AG04449 (cell line): ENCODE measurements at regions of chr17 and their contacts with region 1.

Region 1: DNA sequence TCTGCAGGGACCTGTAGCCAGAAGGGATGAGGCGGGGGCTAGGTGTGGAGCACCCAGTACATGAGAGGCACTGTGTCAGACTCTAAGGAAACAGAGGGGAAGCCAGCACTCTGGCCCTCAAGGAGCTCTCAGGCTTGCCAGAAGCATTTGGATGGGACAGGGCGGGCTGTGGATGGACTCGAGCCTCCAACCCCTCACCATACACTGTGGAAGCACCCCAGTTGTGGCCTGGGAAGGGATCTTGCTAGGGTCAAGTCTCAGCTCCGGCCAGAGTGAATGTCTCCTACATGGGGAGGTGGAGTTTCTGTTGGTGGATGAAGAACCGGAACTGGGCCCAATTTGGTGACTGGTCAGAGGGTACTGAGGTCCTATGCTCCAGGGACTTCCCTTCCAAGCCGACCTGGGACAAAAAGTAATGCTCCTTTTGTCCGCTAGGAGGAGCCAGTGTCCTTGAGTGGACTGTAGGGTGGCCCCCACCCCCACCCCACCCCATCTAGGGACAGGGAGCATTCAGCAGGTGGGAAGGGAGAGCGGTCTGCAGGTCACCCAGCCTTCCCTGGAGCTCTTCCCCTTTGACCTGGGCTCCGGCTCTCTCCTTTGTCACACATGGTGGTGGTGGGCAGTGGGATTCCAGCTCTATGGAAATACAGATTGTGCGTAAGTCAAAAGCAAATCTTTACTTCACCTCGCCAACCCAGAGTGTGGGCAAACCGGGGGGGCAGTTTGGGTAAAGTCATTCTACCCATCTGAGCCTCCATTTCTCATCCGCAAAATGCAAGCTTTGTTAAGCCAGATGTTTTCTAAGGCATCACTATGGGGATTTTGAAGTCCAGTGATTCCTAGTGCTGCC is 20.4 kb upstream of the PHB1 start:
- DNase-seq: no peak
- H3K4me3 ChIP-seq: no peak overlapping the region
- CTCF ChIP-seq: peak; percentile 70

Region 2: DNA sequence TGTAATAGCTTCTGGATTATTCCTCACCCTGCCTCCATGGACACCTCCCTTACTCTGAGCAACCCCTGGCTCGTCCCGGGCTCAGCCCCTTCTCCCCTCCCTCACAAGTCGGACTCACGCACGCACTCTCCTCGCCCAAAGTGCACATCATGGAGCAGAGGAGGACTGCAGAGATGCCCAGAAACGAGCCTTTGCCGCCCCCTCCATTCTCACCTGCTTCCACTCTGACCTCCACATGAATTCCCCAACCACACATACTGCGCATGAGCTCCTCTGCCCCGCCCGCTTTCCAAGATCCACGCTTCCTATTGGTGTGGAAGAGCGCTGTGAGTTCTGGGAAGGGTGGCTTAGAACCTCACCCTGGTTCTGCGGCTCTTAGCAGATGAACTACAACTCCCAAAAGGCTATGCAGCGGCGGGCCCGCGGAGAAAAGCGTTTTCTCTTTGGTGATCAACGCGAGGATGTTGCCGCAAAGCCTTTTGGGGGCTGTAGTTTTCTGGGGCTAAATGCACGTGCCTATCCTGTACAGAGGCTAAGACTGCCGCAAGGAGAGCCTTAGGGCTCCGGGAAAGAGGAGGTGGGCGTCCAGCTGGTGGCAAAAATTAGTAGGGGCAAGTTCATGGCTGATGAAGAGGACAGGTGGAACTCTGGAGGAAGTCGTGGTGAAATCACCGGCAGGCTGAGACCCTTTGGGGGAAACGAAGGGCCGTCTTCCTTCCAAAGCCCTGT is 20.3 kb before region 1 on chr17 and contains the start of gene PHB1:
- CTCF ChIA-PET with region 1: interaction called, 21 read pairs
- POLR2A ChIA-PET with region 1: no interaction called
- DNase-seq: peak; percentile 83
- H3K4me3 ChIP-seq: peak within 1 kb of the TSS; percentile 100
- CTCF ChIP-seq: no peak

Region 3: DNA sequence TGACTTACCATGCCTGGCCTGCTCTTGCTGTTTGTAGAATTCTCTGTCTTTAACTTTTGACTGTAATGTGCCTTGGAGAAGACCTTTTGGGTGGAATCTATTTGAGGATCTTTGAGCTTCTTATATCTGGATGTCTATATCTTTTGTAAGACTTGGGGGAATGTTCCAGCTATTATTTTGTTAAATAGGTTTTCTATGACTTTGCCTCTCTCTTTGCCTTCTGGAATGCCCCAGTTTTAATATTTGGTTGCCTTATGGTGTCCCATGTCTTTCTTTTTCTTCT is 10.1 kb before region 1 on chr17:
- CTCF ChIA-PET with region 1: interaction called, 35 read pairs
- POLR2A ChIA-PET with region 1: no interaction called
- DNase-seq: no peak
- H3K4me3 ChIP-seq: no peak overlapping the region
- CTCF ChIP-seq: no peak

Region 4: DNA sequence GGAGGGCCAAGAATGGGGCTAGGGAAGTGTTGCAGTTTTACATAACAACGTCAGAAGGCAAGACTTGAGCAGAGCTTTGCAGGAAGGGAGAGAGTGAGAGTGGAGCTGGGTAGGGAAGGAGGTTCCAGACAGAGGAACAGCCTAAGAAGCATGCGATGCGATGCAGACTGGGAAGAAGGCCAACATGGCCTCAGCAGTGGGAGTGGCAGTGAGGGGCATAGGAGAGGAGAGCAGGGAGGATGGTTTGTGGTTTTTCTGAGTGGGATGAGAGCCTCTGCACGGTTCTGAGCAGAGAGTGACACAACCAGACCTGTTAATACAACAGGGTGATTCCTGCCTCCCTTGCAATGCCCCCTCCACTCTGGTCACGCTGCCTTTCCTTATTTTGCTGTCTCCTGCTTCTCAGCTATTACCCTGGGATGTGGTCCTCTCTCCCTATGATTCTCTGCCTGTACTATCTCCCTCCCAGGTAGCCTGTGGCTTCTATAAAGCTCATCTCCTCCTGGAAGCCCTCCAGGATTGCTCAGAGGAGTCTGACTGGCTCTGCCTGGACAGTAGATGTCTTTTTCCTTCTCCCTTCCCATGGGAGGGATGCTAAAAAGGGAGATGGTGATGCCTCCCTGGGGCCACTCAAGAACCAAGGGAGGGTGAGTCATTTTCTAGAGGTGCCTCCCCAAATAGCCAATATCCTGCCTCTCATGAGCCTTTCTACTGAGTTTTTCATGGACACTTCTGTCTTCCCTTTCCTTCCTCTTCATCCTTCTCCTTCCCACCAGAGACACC is 21.3 kb after region 1 on chr17:
- CTCF ChIA-PET with region 1: interaction called, 84 read pairs
- POLR2A ChIA-PET with region 1: no interaction called
- DNase-seq: peak; percentile 46
- H3K4me3 ChIP-seq: no peak overlapping the region
- CTCF ChIP-seq: no peak

Region 5: DNA sequence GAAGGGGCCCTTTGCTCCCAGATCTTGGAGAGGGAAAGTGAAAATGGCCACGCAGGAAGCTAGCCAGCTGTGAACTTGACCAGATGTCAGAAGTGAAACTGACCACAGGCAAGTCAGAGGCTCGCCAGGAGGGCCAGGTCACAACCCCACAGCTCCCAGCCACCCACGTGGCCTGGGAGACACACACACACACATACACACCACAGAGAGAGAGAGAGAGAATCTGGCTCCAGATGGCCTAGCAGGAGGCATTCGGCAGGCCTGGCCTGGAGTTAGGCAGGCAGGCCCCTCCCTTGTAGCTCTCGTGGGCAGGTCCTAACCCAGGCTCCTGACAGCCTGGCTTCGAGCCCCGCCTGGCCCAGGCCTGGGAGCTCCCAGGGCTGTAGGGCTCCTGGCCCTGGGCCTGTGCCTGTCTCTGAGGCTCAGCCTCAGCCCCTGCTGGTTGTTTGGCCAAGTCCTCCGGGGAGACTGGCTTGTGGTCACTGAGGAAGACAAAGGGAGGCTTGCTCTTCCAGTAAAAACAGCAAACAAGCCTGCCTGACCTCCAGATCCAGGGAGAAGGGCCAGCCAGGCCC is 80.2 kb after region 1 on chr17:
- CTCF ChIA-PET with region 1: interaction called, 14 read pairs
- POLR2A ChIA-PET with region 1: no interaction called
- DNase-seq: peak; percentile 41
- H3K4me3 ChIP-seq: no peak overlapping the region
- CTCF ChIP-seq: peak; percentile 23

Region 6: GRCh38 chr17:49548051-49548505 is 113.0 kb after region 1 on chr17:
- CTCF ChIA-PET with region 1: interaction called, 376 read pairs
- POLR2A ChIA-PET with region 1: no interaction called
- DNase-seq: no peak
- H3K4me3 ChIP-seq: no peak overlapping the region
- CTCF ChIP-seq: no peak

Region 7: DNA sequence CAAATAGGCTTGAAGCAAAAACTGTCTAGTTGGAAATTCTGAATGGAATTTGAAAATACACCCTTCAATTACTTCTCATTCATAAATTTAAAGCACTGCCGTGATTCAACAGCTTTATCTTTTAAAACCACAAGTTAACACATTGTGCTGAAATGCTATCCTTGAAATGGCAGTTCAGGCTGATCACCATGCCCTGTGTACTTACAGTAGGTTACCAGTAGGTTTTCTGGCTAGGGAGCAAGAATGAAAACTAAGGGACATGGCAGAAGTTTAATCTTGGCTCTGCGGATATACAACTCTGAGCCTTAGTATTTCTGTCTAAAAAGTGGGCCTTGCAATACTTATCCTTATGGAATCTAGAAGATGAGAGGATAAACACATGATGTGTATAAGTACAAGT is 168.7 kb after region 1 on chr17:
- CTCF ChIA-PET with region 1: no interaction called
- POLR2A ChIA-PET with region 1: no interaction called
- DNase-seq: no peak
- H3K4me3 ChIP-seq: no peak overlapping the region
- CTCF ChIP-seq: no peak